Heart right ventricle (tissue), 16 donors: ENCODE measurements at regions of chr4 and their contacts with region 1.

Region 1: DNA sequence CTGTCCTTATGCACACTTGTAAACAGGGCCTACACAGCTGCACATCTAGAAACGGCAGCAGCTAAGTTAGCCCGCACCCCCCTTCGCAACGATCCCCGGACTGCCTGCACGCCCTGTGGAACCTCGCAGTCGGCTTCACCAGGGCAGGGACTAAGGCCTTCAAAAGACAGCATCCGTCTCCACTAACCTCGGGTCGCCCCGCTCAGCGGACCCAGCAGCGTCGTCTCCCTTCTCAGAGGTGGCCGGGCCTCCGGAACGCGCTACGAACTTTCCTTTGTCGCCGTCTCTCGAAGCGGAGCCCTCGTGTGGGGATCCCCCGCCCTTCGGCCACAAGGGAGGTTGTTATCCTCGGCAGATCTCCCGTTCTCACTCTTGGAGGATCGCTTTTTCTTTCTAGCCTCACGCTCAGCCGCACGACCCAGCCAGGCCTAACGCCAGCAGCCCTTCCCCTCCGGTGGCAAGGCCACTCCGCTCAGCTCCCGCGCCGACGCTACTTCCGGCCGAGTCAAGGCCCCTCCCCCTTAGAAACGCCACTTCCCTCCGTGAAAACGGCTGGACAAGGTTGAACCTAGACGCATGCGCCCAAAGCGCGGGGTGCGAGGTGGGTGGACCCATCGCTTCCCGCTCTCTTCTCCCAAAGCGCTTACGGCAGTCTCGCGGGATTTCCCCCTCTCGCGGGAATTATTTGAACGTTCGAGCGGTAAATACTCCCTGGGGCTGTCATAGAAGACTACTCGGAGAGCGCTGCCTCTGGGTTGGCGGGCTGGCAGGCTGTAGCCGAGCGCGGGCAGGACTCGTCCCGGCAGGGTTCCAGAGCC is at the starts of genes DCAF16 and NCAPG:
- DNase-seq: peak; percentile 99 to 100
- ATAC-seq: peak; percentile 100
- H3K4me3 ChIP-seq: peak within 1 kb of the TSS; percentile 63 to 91 (median 84)
- H3K27ac ChIP-seq: peak within 1 kb of the TSS; percentile 88 to 98 (median 95)
- H3K4me1 ChIP-seq: peaks cover 0 to 63% (median 41%) of the 10 kb centered on the region in 9 donors
- H3K27me3 ChIP-seq: no peaks in the 10 kb centered on the region
- CTCF ChIP-seq: no peak
- total RNA-seq, gene DCAF16: 15.7 to 22.0 (median 19.7) TPM
- total RNA-seq, gene NCAPG: 0.08 to 3.6 (median 0.33) TPM

Region 2: GRCh38 chr4:17544205-17544604 is 266.3 kb before region 1 on chr4:
- intact Hi-C with region 1: loop called in 7 of 10 experiments (anchors 2 to 10 kb)
- DNase-seq: no peak
- ATAC-seq: peak in 1 of 8 donors; percentile 27
- H3K4me3 ChIP-seq: no peak overlapping the region
- H3K27ac ChIP-seq: no peak overlapping the region
- H3K4me1 ChIP-seq: peaks cover 0 to 10% (median 3%) of the 10 kb centered on the region in 9 donors
- H3K27me3 ChIP-seq: peaks cover 0 to 5% (median 0%) of the 10 kb centered on the region in 7 donors
- CTCF ChIP-seq: no peak

Region 3: DNA sequence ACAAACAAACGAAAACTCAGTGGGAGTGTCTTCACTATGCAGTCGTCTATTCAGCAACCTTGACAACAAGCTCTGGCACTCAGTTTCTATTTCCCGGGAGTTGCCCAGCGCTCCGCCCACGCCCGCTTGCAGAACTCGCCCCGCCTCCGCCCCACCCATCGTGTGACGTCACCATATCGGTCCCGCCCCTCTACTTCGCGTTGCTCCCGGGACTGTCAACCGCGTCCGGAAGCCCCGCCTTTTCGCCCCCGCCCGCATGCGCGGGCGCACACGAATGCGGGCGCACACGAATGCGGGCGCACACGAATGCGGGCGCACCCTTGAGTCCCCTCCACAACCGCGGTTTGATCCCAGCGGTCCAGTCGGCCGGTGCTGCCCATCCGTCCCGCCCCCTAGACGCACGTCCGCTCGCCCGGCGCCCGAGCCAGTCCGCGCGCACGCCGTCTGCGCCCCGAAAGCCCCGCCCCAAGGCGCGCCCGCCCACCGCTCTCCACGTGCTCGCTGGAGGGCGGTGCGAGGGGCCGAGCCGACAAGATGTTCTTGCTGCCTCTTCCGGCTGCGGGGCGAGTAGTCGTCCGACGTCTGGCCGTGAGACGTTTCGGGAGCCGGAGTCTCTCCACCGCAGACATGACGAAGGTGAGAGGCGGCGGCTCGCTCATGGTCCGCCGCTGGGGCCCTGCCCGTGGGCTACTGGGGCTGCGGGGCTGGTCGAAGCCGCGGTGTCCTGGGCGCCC is 233.4 kb before region 1 on chr4 and contains the start of gene LAP3:
- intact Hi-C with region 1: loop called in 2 of 10 experiments (anchors 10 kb)
- DNase-seq: peak; percentile 98 to 99
- ATAC-seq: peak; percentile 96 to 100 (median 98)
- H3K4me3 ChIP-seq: peak within 1 kb of the TSS; percentile 58 to 100 (median 78)
- H3K27ac ChIP-seq: peak within 1 kb of the TSS; percentile 82 to 99 (median 94)
- H3K4me1 ChIP-seq: peaks cover 0 to 52% (median 30%) of the 10 kb centered on the region in 9 donors
- H3K27me3 ChIP-seq: no peaks in the 10 kb centered on the region
- CTCF ChIP-seq: no peak
- total RNA-seq, gene LAP3: 55.5 to 222 (median 65.4) TPM

Region 4: GRCh38 chr4:17587094-17587822 is 223.2 kb before region 1 on chr4:
- intact Hi-C with region 1: no loop called
- DNase-seq: no peak
- ATAC-seq: no peak
- H3K4me3 ChIP-seq: no peak overlapping the region
- H3K27ac ChIP-seq: no peak overlapping the region
- H3K4me1 ChIP-seq: peaks cover 0 to 39% (median 9%) of the 10 kb centered on the region in 9 donors
- H3K27me3 ChIP-seq: no peaks in the 10 kb centered on the region
- CTCF ChIP-seq: no peak

Region 5: GRCh38 chr4:17740702-17741101 is 69.8 kb before region 1 on chr4:
- intact Hi-C with region 1: no loop called
- DNase-seq: no peak
- ATAC-seq: no peak
- H3K4me3 ChIP-seq: no peak overlapping the region
- H3K27ac ChIP-seq: no peak overlapping the region
- H3K4me1 ChIP-seq: no peaks in the 10 kb centered on the region
- H3K27me3 ChIP-seq: peaks cover 0 to 2% (median 0%) of the 10 kb centered on the region in 7 donors
- CTCF ChIP-seq: no peak

Region 6: GRCh38 chr4:18021722-18022571 is 211.5 kb after region 1 on chr4 and contains the start of gene LCORL:
- intact Hi-C with region 1: loop called in 7 of 10 experiments (anchors 1 to 10 kb)
- DNase-seq: peak; percentile 90 to 93
- ATAC-seq: peak; percentile 91 to 97 (median 96)
- H3K4me3 ChIP-seq: peak within 1 kb of the TSS; percentile 74 to 98 (median 91)
- H3K27ac ChIP-seq: peak within 1 kb of the TSS; percentile 87 to 98 (median 94)
- H3K4me1 ChIP-seq: peaks cover 0 to 20% (median 14%) of the 10 kb centered on the region in 9 donors
- H3K27me3 ChIP-seq: no peaks in the 10 kb centered on the region
- CTCF ChIP-seq: peak in 4 of 9 donors; percentile 14 to 23 (median 20)
- total RNA-seq, gene LCORL: 4.1 to 11.1 (median 7.2) TPM

Region 7: DNA sequence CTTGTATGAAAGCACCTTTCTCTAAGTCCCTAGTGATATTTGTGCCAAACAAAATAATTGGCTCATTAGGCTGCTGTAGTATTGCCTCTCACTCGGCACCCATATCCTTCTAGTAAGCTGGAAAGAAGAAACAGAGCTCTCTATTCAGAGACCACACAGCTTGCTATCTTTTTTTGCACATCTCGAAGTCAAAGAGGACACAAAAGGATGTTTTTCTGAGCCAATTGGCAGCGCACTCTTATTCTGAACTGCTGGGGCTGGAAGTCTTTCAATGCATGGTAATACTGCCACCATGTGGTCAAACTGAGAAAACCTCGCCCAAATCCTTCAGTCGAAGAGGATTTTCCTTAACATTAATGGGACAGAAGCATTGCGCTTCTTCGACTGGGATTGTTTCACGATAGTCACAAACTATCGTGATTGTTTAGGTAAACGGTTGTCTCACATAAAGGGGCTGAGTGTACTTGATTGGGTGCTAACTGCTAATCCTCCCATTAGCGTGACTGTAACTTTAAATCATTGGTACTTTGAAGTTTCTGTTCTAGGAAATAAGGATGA is 783.1 kb after region 1 on chr4:
- intact Hi-C with region 1: loop called in 6 of 10 experiments (anchors 5 to 10 kb)
- DNase-seq: peak in 1 of 2 donors; percentile 55
- ATAC-seq: peak in 6 of 8 donors; percentile 57 to 68 (median 61)
- H3K4me3 ChIP-seq: no peak overlapping the region
- H3K27ac ChIP-seq: no peak overlapping the region
- H3K4me1 ChIP-seq: peaks cover 0 to 6% (median 0%) of the 10 kb centered on the region in 9 donors
- H3K27me3 ChIP-seq: peaks cover 0 to 6% (median 0%) of the 10 kb centered on the region in 7 donors
- CTCF ChIP-seq: peak; percentile 75 to 91 (median 82)